ENCODE measurements at regions of chr12 and their contacts with region 1.

Region 1: DNA sequence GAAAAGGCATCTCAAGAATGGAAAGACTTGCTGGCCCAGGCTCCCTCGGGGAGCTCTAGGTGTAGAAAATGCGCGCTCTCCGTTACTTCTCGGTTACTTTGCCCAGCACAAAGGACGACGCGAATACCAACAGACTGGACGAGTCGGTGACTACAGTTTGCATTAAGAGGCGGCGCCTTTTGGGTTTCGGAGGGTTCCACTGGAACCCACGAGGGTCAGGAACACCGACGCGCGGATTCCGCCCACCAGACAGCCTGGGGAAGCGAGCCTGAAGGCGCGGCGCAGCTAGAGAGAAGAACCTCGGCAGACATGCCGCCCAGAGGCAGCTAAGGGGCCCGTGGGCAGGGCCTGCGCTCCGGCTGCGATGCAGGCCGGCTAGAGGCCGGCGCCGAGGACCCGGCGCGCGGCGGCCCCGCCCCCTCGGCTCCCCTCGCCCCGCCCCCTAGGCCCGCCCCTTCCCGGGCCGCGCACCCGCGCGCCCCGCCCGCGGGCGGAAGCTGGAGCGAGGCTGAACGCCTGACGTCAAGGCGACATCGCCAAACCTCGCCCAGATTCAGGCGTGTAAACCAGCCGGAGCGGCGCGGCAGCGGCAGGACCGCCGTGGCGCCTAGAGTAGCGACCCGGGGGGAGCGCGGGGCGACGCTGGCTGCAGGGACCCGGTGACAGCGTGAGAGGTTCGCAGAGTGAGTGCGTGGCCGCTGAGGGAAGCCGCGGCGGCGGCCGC is at the start of gene RAP1B:
- DNase-seq: peak; percentile 78 to 96 (median 88)
- ATAC-seq: peak; percentile 74
- H3K4me3 ChIP-seq: peak within 1 kb of the TSS; percentile 98
- H3K4me3 Mint-ChIP-seq: peak within 1 kb of the TSS; percentile 95
- H3K27ac ChIP-seq: peak within 1 kb of the TSS; percentile 93 to 96
- H3K27ac Mint-ChIP-seq: peak within 1 kb of the TSS; percentile 94
- H3K4me1 ChIP-seq: peaks cover 19% of the 10 kb centered on the region
- H3K4me1 Mint-ChIP-seq: peaks cover 43% of the 10 kb centered on the region
- H3K27me3 ChIP-seq: no peaks in the 10 kb centered on the region
- H3K27me3 Mint-ChIP-seq: no peaks in the 10 kb centered on the region
- CTCF ChIP-seq: no peak
- total RNA-seq, gene RAP1B: 256 to 261 TPM

Region 2: GRCh38 chr12:68223083-68223747 is 387.3 kb before region 1 on chr12:
- CTCF ChIA-PET with region 1: no interaction called
- POLR2A ChIA-PET with region 1: no interaction called
- intact Hi-C with region 1: no loop called
- DNase-seq: peak; percentile 48 to 89 (median 60)
- ATAC-seq: peak; percentile 97
- H3K4me3 ChIP-seq: no peak overlapping the region
- H3K4me3 Mint-ChIP-seq: peak overlapping the region; percentile 72
- H3K27ac ChIP-seq: no peak overlapping the region
- H3K27ac Mint-ChIP-seq: no peak overlapping the region
- H3K4me1 ChIP-seq: peaks cover 6% of the 10 kb centered on the region
- H3K4me1 Mint-ChIP-seq: peaks cover 6% of the 10 kb centered on the region
- H3K27me3 ChIP-seq: no peaks in the 10 kb centered on the region
- H3K27me3 Mint-ChIP-seq: no peaks in the 10 kb centered on the region
- CTCF ChIP-seq: peak; percentile 87

Region 3: GRCh38 chr12:68358532-68359485 is 251.7 kb before region 1 on chr12:
- CTCF ChIA-PET with region 1: no interaction called
- POLR2A ChIA-PET with region 1: interaction called, 48 read pairs
- intact Hi-C with region 1: loop called (anchors 2 kb)
- DNase-seq: peak; percentile 36 to 84 (median 55)
- ATAC-seq: peak; percentile 92
- H3K4me3 ChIP-seq: no peak overlapping the region
- H3K4me3 Mint-ChIP-seq: no peak overlapping the region
- H3K27ac ChIP-seq: no peak overlapping the region
- H3K27ac Mint-ChIP-seq: peak overlapping the region; percentile 67
- H3K4me1 ChIP-seq: peaks cover 21% of the 10 kb centered on the region
- H3K4me1 Mint-ChIP-seq: peaks cover 29% of the 10 kb centered on the region
- H3K27me3 ChIP-seq: no peaks in the 10 kb centered on the region
- H3K27me3 Mint-ChIP-seq: no peaks in the 10 kb centered on the region
- CTCF ChIP-seq: peak; percentile 72

Region 4: DNA sequence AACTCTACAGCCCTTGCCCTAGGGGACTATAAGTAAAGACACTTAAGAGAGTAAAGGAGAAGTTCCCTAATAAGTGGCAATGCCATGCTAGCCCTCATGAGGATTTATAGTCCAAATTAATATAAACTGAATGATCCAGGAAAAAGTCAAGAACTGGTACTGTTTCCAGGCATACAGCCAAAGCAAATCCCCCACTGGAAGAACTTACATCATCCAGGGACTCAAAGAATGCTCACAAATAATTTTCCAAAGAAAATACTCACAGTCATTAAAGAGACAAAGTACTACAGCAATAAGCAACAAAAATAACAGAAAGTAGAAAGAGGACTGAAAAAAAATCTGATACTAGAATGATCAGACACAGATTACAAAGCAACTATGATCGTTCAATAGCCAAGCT is 79.6 kb before region 1 on chr12:
- CTCF ChIA-PET with region 1: no interaction called
- POLR2A ChIA-PET with region 1: interaction called, 13 read pairs
- intact Hi-C with region 1: loop called in 1 of 2 experiments (anchors 5 kb)
- DNase-seq: no peak
- ATAC-seq: no peak
- H3K4me3 ChIP-seq: no peak overlapping the region
- H3K4me3 Mint-ChIP-seq: no peak overlapping the region
- H3K27ac ChIP-seq: no peak overlapping the region
- H3K27ac Mint-ChIP-seq: no peak overlapping the region
- H3K4me1 ChIP-seq: no peaks in the 10 kb centered on the region
- H3K4me1 Mint-ChIP-seq: peaks cover 9% of the 10 kb centered on the region
- H3K27me3 ChIP-seq: no peaks in the 10 kb centered on the region
- H3K27me3 Mint-ChIP-seq: no peaks in the 10 kb centered on the region
- CTCF ChIP-seq: no peak

Region 5: GRCh38 chr12:68587448-68587873 is 23.1 kb before region 1 on chr12:
- CTCF ChIA-PET with region 1: interaction called, 5 read pairs
- POLR2A ChIA-PET with region 1: interaction called, 119 read pairs
- intact Hi-C with region 1: loop called in 1 of 2 experiments (anchors 2 kb)
- DNase-seq: peak in 7 of 14 experiments; percentile 8 to 71 (median 49)
- ATAC-seq: peak; percentile 65
- H3K4me3 ChIP-seq: no peak overlapping the region
- H3K4me3 Mint-ChIP-seq: peak overlapping the region; percentile 77
- H3K27ac ChIP-seq: no peak overlapping the region
- H3K27ac Mint-ChIP-seq: peak overlapping the region; percentile 81
- H3K4me1 ChIP-seq: peaks cover 34% of the 10 kb centered on the region
- H3K4me1 Mint-ChIP-seq: peaks cover 63% of the 10 kb centered on the region
- H3K27me3 ChIP-seq: no peaks in the 10 kb centered on the region
- H3K27me3 Mint-ChIP-seq: no peaks in the 10 kb centered on the region
- CTCF ChIP-seq: no peak

Region 6: DNA sequence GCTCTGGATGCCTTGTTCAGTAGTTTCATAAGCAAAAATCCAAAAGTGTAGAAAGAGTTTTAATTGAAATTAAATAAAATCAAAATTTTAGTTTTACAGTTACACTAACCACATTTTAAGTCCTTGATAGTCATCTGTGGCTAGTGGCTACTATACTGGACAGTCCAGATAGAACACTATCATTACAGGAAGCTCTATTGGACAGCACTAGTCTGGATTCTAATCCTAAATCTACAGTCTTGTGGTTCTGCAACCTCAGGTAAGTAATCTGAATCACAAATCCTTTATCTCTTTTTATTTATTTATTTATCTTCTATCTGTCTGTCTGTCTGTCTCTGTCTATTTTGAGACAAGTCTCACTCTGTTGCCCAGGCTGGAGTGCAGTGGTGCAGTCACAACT is 18.2 kb after region 1 on chr12:
- CTCF ChIA-PET with region 1: interaction called, 3 read pairs
- POLR2A ChIA-PET with region 1: interaction called, 5 read pairs
- intact Hi-C with region 1: loop called in 1 of 2 experiments (anchors 2 kb)
- DNase-seq: no peak
- ATAC-seq: peak; percentile 29
- H3K4me3 ChIP-seq: no peak overlapping the region
- H3K4me3 Mint-ChIP-seq: peak overlapping the region; percentile 71
- H3K27ac ChIP-seq: no peak overlapping the region
- H3K27ac Mint-ChIP-seq: peak overlapping the region; percentile 57
- H3K4me1 ChIP-seq: peaks cover 49% of the 10 kb centered on the region
- H3K4me1 Mint-ChIP-seq: peaks cover 87% of the 10 kb centered on the region
- H3K27me3 ChIP-seq: no peaks in the 10 kb centered on the region
- H3K27me3 Mint-ChIP-seq: no peaks in the 10 kb centered on the region
- CTCF ChIP-seq: no peak

Region 7: GRCh38 chr12:68675101-68675842 is 64.7 kb after region 1 on chr12:
- CTCF ChIA-PET with region 1: no interaction called
- POLR2A ChIA-PET with region 1: interaction called, 11 read pairs
- intact Hi-C with region 1: loop called (anchors 2 to 5 kb)
- DNase-seq: peak; percentile 37 to 91 (median 75)
- ATAC-seq: peak; percentile 98
- H3K4me3 ChIP-seq: peak overlapping the region; percentile 2
- H3K4me3 Mint-ChIP-seq: peak overlapping the region; percentile 60
- H3K27ac ChIP-seq: peak overlapping the region; percentile 26 to 45
- H3K27ac Mint-ChIP-seq: peak overlapping the region; percentile 77
- H3K4me1 ChIP-seq: peaks cover 29% of the 10 kb centered on the region
- H3K4me1 Mint-ChIP-seq: peaks cover 59% of the 10 kb centered on the region
- H3K27me3 ChIP-seq: no peaks in the 10 kb centered on the region
- H3K27me3 Mint-ChIP-seq: no peaks in the 10 kb centered on the region
- CTCF ChIP-seq: no peak

Region 8: GRCh38 chr12:68807576-68808387 is 197.2 kb after region 1 on chr12 and contains the start of gene MDM2:
- CTCF ChIA-PET with region 1: interaction called, 6 read pairs
- POLR2A ChIA-PET with region 1: interaction called, 35 read pairs
- intact Hi-C with region 1: loop called in 1 of 2 experiments (anchors 10 kb)
- DNase-seq: peak; percentile 92 to 99 (median 96)
- ATAC-seq: peak; percentile 91
- H3K4me3 ChIP-seq: peak within 1 kb of the TSS; percentile 95
- H3K4me3 Mint-ChIP-seq: peak within 1 kb of the TSS; percentile 94
- H3K27ac ChIP-seq: peak within 1 kb of the TSS; percentile 92
- H3K27ac Mint-ChIP-seq: peak within 1 kb of the TSS; percentile 100
- H3K4me1 ChIP-seq: peaks cover 17% of the 10 kb centered on the region
- H3K4me1 Mint-ChIP-seq: peaks cover 34% of the 10 kb centered on the region
- H3K27me3 ChIP-seq: no peaks in the 10 kb centered on the region
- H3K27me3 Mint-ChIP-seq: no peaks in the 10 kb centered on the region
- CTCF ChIP-seq: peak; percentile 68
- total RNA-seq, gene MDM2: 90.8 TPM